Sigmoid colon (tissue), 7 donors: ENCODE measurements at regions of chr7 and their contacts with region 1.

Region 1: GRCh38 chr7:39580149-39580874 is 14.1 kb downstream of the YAE1 start:
- DNase-seq: peak; percentile 89
- H3K4me3 ChIP-seq: no peak overlapping the region
- H3K27ac ChIP-seq: no peak overlapping the region
- H3K4me1 ChIP-seq: no peaks in the 10 kb centered on the region
- H3K27me3 ChIP-seq: no peaks in the 10 kb centered on the region
- CTCF ChIP-seq: peak; percentile 50 to 82 (median 70)
- EP300 ChIP-seq: no peak
- POLR2A ChIP-seq: no peak

Region 2: GRCh38 chr7:39623018-39623731 is 42.9 kb after region 1 on chr7 and contains the start of gene RALA:
- intact Hi-C with region 1: loop called (anchors 2 kb)
- DNase-seq: peak; percentile 96
- H3K4me3 ChIP-seq: peak within 1 kb of the TSS; percentile 77 to 96 (median 89)
- H3K27ac ChIP-seq: peak within 1 kb of the TSS; percentile 84 to 90 (median 88)
- H3K4me1 ChIP-seq: peaks cover 0 to 39% (median 29%) of the 10 kb centered on the region in 4 donors
- H3K27me3 ChIP-seq: no peaks in the 10 kb centered on the region
- CTCF ChIP-seq: no peak
- EP300 ChIP-seq: no peak
- POLR2A ChIP-seq: peak; percentile 62 to 67
- total RNA-seq, gene RALA: 11.5 to 19.6 (median 15.5) TPM

Region 3: GRCh38 chr7:39644170-39644569 is 63.9 kb after region 1 on chr7:
- intact Hi-C with region 1: no loop called
- DNase-seq: no peak
- H3K4me3 ChIP-seq: no peak overlapping the region
- H3K27ac ChIP-seq: no peak overlapping the region
- H3K4me1 ChIP-seq: peaks cover 0 to 17% (median 6%) of the 10 kb centered on the region in 4 donors
- H3K27me3 ChIP-seq: no peaks in the 10 kb centered on the region
- CTCF ChIP-seq: no peak
- EP300 ChIP-seq: no peak
- POLR2A ChIP-seq: no peak

Region 4: DNA sequence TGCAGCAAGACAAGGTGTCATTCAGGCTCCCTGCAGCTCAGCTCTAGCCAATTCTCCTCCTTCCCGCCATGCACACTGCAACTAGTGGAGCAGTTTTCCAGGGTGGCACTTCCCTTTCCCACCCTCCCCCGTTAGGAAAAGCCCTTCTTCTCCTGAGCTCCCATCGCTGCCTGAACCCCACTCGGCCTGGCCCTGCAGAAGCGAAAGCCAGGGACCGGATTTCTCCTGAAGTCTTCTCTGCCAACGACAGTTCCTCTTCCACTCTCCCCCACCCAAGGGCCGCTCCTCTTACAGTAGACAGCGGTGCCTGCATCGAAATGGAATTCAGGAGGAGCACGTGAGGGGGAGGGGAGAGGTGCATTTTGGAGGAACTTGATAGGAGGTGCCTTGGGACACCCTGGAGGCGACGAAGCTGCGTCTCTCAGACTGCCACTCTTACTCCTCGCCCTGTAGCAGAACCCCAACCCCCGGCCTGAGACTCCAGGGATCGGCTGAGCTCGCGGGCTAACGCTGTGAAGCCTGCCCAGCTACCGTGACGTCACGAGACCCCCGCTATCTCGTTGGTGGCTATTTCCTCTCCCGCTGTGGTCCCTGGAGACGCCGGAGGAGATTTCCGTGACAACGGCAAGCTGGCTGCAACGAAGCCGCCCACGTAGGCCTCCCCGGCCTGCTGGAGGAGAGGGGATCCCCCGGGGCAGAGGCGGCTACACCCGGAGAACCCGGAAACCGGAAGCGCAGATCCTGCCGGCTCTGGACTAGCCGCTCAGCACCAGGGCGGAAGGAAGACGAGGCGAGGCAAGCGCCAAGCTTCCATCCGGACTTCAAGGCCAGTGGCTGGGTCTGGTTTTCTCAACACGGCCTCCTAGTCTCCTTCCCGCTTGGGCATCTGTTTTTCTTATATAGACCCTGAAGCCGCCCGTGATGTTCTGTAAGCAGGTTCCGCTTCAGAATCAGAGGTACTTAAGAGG is 152.8 kb after region 1 on chr7:
- intact Hi-C with region 1: loop called (anchors 5 kb)
- DNase-seq: peak; percentile 97
- H3K4me3 ChIP-seq: peak overlapping the region; percentile 51 to 62 (median 58)
- H3K27ac ChIP-seq: peak overlapping the region; percentile 71 to 78 (median 74)
- H3K4me1 ChIP-seq: peaks cover 0 to 23% (median 13%) of the 10 kb centered on the region in 4 donors
- H3K27me3 ChIP-seq: no peaks in the 10 kb centered on the region
- CTCF ChIP-seq: no peak
- EP300 ChIP-seq: no peak
- POLR2A ChIP-seq: no peak

Region 5: DNA sequence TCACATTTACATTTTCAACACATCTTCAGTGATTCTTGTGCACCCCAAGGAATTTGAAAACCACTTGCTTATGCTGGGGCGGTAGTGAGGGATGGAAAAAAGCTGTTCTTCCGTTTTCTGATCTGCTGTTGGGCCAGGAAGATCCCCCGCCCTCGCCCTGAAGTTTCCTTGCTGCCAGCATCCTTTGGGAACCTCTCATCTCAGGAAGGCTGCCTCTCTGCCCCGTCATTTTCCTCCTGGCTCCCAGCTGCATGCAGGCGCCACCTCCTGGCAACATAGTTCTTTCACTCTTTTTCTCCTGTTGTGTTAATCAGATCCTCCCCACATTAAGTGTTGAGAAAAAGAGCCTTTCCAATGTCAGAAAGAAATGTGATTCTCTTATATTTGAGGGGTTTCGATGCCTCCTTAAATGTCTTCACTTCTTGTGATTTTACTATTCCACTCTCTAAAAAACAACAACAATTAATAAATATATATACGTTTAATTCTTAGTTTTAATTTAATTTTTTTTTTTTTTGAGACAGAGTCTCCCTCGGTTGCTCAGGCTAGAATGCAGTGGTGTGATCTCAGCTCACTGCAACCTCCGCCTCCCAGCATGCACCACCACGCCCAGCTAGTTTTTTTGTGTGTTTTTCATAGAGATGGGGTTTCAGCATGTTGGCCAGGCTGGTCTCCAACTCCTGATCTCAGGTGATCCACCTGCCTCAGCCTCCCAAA is 165.9 kb after region 1 on chr7:
- intact Hi-C with region 1: loop called (anchors 1 kb)
- DNase-seq: peak; percentile 85
- H3K4me3 ChIP-seq: no peak overlapping the region
- H3K27ac ChIP-seq: no peak overlapping the region
- H3K4me1 ChIP-seq: peaks cover 0 to 4% (median 2%) of the 10 kb centered on the region in 4 donors
- H3K27me3 ChIP-seq: no peaks in the 10 kb centered on the region
- CTCF ChIP-seq: peak; percentile 32 to 66 (median 59)
- EP300 ChIP-seq: no peak
- POLR2A ChIP-seq: no peak

Region 6: DNA sequence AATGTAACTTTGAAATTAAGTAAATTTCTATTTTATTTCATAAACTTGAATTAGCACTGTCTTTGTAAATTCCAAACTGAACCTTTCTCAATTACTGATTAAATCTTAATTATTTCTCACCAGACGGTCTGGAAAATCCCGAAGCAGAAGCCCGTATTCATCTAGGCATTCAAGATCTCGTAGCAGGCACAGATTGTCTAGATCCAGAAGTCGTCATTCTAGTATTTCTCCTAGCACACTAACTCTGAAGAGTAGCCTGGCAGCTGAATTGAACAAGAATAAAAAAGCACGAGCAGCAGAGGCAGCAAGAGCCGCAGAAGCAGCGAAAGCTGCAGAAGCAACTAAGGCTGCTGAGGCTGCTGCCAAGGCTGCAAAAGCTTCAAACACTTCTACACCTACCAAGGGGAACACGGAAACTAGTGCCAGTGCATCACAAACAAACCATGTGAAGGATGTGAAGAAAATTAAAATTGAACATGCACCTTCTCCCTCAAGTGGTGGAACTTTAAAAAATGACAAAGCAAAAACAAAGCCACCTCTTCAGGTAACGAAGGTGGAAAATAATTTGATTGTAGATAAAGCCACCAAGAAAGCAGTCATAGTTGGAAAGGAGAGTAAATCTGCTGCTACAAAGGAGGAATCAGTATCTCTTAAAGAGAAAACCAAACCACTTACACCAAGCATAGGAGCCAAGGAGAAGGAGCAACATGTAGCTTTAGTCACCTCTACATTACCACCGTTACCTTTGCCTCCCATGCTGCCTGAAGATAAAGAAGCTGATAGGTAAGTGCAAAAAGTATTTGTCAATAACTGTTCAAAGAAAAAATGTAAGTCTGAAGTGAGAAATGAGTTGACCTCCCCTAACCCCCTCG is 407.4 kb after region 1 on chr7:
- intact Hi-C with region 1: no loop called
- DNase-seq: no peak
- H3K4me3 ChIP-seq: no peak overlapping the region
- H3K27ac ChIP-seq: no peak overlapping the region
- H3K4me1 ChIP-seq: peaks cover 0 to 47% (median 15%) of the 10 kb centered on the region in 4 donors
- H3K27me3 ChIP-seq: no peaks in the 10 kb centered on the region
- CTCF ChIP-seq: no peak
- EP300 ChIP-seq: no peak
- POLR2A ChIP-seq: no peak

Region 7: GRCh38 chr7:40057292-40057691 is 477.0 kb after region 1 on chr7:
- intact Hi-C with region 1: loop called (anchors 10 kb)
- DNase-seq: no peak
- H3K4me3 ChIP-seq: no peak overlapping the region
- H3K27ac ChIP-seq: no peak overlapping the region
- H3K4me1 ChIP-seq: peaks cover 0 to 16% (median 1%) of the 10 kb centered on the region in 4 donors
- H3K27me3 ChIP-seq: no peaks in the 10 kb centered on the region
- CTCF ChIP-seq: no peak
- EP300 ChIP-seq: no peak
- POLR2A ChIP-seq: no peak